Posterior cingulate gyrus (tissue), 11 donors: ENCODE measurements at regions of chr14 and their contacts with region 1.

Region 1: DNA sequence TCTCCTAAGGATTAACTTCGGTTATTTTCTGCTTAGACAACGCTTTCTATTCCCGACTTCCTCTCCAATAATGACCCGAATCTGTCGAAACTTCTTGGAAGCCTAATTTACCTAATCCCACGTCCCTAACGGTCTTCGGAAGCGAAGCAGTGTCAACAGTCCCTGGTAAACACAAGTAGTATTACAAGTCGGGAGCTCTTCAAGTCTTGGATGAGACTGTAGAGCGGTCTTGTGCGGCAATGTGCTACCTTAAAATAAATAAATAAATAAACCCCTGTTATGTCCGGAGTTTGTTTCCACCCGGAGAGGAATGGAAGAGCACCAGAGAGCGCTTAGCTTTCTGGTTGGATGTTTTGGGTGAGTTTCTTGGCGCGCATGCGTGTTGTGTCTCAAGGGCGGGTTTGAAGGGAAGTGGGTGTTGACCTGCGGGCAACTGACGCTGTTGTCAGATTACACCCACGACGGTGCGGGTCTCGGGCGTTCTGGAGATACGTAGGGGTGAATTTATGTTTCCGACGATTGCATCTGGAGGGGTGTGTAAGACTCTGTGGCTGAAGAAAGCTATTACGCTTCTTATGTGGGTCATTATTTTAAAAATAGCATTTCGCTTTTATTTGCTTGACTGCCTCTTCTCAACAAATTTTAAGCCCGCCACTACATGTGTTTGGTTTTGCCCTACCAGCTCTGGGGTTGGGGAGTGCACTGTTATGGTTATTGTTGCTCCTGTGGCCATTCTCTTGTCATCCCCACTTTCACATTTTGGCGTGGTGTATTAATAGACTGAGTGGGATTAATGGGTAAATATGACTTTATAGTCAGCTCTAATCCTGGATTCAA is at the starts of genes KIAA0586 and TIMM9:
- DNase-seq: peak; percentile 85 to 98 (median 91)

Region 2: DNA sequence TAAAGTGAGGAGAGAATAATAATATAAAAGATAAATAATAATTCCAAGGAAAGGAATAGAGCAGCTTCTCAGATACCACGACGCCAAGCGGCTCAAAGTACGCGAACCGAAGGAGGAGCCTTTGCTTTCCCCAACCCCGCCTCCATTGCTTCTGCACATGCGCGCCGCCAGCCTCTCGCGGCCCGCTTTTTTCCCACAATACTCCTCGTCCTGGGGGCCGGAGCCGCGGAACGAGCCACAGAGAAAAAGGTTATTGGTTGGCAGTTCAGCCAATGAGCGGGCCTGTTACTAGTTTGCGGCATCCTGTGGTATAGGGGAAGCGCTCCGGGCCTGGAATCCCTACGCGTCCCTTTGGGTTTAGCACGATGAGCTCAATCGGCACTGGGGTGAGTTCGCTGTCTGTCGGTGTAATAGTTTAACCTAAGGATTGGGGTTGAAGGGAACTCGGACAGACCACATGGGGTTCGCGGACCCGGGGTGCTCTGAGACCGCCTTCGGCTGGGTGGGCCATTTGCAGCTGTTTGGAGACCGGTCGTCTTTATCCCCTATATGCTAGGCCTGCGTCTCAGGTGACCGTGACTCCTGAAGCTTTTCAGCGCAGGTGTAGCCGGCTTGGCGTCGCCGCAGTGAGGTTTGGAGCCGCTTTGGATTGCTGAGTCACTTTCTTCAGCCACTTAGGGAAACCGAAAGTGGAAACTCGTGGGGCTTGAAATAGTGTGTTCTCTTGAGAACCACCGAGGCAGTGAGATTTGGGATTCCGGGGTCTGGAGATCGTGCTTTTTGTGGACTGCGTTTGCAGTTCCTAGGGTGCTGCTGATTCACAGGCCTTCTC is 182.7 kb before region 1 on chr14 and contains the start of gene PSMA3:
- intact Hi-C with region 1: loop called (anchors 5 kb)
- DNase-seq: peak; percentile 94 to 99 (median 97)

Region 3: DNA sequence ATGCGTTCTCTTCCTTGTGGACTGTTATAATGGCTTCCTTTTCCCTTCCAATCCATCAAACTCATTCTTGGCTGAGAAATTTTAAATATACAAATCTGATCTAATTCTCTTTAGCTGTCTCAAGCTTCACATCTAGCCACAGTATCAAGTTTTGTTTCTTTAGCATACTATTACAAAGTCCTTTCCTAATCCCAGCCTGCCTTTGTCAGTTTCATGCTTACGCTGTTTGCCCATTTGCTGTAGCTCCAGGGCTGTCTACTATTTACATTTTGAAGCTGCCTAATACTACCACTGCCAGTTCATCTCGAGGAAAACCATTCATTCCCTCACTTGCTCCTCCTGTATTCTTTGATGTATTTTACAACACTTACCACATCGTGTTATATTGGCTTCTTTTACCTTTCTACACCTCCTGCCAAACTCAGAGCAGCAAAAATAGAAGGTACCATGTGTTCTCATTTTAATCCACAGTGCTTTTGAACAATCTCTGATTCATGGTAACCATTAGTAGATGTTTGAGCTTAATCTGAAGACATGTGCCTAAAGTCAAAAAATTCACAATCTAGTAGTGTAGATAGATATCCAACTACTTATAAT is 86.2 kb before region 1 on chr14:
- intact Hi-C with region 1: no loop called
- DNase-seq: no peak

Region 4: DNA sequence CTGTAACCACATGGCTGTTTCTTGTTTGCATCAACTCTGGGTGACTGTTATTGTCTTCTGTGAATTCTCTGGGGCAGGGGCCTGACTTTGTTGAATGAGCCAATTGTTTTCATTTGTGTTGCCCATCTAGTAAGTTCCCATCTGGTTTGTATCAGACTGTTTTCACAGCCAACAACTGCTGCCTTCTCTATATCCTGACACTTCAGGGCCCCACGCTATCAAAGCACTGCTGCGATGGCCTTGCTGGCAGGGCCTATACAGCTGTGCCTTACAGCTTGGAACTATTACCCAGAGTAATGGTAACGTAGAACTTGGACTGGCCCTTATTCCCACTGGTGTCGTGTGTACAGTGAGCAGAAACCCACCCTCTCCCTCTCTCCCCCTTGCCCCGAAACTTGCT is 105.9 kb after region 1 on chr14:
- intact Hi-C with region 1: no loop called
- DNase-seq: peak in 7 of 10 donors; percentile 16 to 86 (median 35)

Region 5: GRCh38 chr14:58677996-58678395 is 250.5 kb after region 1 on chr14:
- intact Hi-C with region 1: no loop called
- DNase-seq: no peak